Gastrocnemius medialis (tissue), 4 donors: ENCODE measurements at regions of chr2 and their contacts with region 1.

Region 1: DNA sequence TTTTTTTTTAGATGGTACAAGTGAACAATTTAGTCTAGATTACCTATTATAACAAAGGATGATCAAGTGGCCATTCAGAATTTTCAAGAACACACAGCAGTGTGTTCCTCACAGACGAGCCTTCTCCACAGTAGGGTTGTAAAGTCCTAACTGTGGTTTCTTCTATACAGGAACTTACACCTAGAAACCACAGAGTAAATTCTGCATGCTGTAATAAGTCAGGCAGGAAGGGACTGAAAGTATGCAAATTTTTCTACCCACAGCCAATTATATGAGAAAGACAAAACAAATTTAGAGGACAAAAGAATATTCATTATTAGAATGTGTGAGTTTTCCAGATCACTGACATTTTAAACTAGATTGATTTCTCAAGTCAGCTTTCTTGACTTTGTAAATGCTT is 99.5 kb downstream of the RBMS1 start:
- DNase-seq: no peak
- ATAC-seq: no peak
- H3K4me3 ChIP-seq: no peak overlapping the region
- H3K27ac ChIP-seq: peak overlapping the region in 1 of 4 donors; percentile 11
- H3K4me1 ChIP-seq: peaks cover 29 to 43% of the 10 kb centered on the region in 2 donors
- H3K27me3 ChIP-seq: no peaks in the 10 kb centered on the region
- CTCF ChIP-seq: no peak
- POLR2A ChIP-seq: no peak

Region 2: GRCh38 chr2:160175169-160176134 is 218.7 kb before region 1 on chr2:
- in situ Hi-C with region 1: no loop called
- intact Hi-C with region 1: no loop called
- DNase-seq: no peak
- ATAC-seq: no peak
- H3K4me3 ChIP-seq: no peak overlapping the region
- H3K27ac ChIP-seq: peak overlapping the region in 2 of 4 donors; percentile 7 to 29
- H3K4me1 ChIP-seq: no peaks in the 10 kb centered on the region
- H3K27me3 ChIP-seq: no peaks in the 10 kb centered on the region
- CTCF ChIP-seq: no peak
- POLR2A ChIP-seq: no peak

Region 3: DNA sequence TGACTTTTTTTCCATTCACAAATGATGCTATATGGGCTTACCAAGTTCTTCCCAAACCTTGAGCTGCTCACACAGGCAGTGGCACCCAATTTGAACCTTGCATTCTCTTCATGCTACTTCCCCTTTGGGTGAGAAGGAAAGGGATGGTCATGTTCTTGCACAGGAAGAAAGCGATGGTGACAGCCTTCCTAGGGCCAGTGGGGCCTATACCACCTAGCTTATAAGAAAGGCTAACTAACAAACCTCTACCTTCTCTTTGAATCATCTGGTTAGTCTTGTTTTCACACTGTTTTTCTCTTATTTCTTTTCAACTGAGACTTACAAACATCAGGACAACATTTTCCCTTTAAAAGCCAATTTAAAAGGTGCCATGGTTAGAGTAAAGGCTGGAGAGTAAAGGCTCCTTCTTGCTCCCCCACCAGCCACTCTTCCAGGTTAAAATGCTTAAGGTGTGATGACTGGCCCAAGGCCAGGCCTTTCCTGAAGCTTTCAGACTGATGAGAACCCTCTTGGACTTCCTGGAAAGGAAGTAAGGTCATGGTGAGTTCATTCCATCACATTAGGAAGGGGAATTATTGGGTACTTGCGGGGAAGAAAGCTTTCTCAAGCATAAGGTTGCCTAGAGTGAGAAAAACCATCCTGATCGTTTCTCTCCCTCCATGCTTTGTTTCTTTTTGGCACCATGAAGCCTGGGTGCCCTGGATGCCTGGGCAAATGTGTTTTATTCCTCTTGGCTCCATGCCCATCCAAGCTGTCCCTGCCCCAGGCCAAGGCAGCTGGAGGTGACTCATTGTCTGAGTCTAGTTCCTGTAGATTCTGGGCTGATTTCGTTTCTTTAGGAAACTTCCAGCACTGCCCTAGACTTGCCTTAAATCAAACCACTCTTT is 152.7 kb before region 1 on chr2:
- in situ Hi-C with region 1: no loop called
- intact Hi-C with region 1: no loop called
- DNase-seq: peak in 1 of 2 donors; percentile 31
- ATAC-seq: peak; percentile 4 to 33
- H3K4me3 ChIP-seq: no peak overlapping the region
- H3K27ac ChIP-seq: peak overlapping the region; percentile 83 to 87 (median 84)
- H3K4me1 ChIP-seq: peaks cover 83 to 91% of the 10 kb centered on the region in 2 donors
- H3K27me3 ChIP-seq: no peaks in the 10 kb centered on the region
- CTCF ChIP-seq: no peak
- POLR2A ChIP-seq: no peak

Region 4: DNA sequence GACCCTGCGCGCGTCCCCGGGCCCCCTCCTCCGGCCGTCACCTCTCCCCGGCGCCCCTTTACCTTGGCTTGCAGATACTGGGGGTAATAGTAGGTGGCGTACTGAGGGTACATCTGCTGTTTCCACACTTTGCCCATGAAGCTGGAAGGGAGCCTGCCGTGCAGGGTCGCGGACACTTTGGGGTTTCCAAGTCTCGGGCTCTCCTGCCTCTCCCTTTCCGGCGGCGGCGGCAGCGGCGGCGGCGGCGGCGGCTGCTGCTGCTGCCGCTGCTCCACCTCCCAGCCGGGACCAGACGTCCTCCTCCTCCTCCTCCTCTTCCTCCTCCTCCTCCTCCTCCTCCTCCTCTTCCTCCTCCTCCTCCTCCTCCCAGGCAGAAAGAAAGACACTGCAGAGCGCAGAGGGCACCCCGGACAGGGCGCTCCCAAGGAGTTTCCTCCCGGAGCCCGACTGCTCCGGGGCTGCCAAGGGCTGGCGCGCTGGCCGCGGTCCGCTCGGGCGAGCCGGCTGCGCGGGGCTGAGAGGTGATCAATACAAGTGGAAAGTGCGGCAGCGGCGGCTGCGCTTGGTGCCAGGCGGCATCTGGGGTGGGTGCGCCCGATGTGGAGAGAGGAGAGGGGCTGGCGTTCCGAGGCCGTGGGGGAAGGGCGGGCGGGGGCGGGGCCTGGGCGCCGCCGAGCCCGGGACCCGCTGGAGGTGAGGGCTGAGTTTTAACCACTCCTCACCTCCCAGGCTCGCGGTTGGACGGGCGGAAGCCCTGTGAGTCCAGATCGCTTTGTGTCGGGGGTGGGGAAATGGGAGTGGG is 99.3 kb after region 1 on chr2 and contains the start of gene RBMS1:
- in situ Hi-C with region 1: loop called in 1 of 4 experiments (anchors 25 kb)
- intact Hi-C with region 1: no loop called
- DNase-seq: peak; percentile 22 to 40
- ATAC-seq: peak; percentile 48 to 60
- H3K4me3 ChIP-seq: peak within 1 kb of the TSS; percentile 84 to 99 (median 98)
- H3K27ac ChIP-seq: peak within 1 kb of the TSS; percentile 87 to 97 (median 93)
- H3K4me1 ChIP-seq: peaks cover 18 to 20% of the 10 kb centered on the region in 2 donors
- H3K27me3 ChIP-seq: no peaks in the 10 kb centered on the region
- CTCF ChIP-seq: no peak
- POLR2A ChIP-seq: peak; percentile 3 to 5
- total RNA-seq, gene RBMS1: 13.0 to 24.5 (median 14.1) TPM